MCF 10A (cell line): ENCODE measurements at regions of chr3 and their contacts with region 1.

Region 1: GRCh38 chr3:187745201-187746058 is at the start of gene BCL6:
- DNase-seq: peak; percentile 98
- H3K4me3 Mint-ChIP-seq: peak within 1 kb of the TSS; percentile 98
- H3K27ac Mint-ChIP-seq: peak within 1 kb of the TSS; percentile 100
- H3K4me1 Mint-ChIP-seq: peaks cover 15% of the 10 kb centered on the region
- H3K27me3 Mint-ChIP-seq: no peaks in the 10 kb centered on the region
- CTCF ChIP-seq: no peak
- total RNA-seq, gene BCL6: 16.4 and 20.9 TPM in 2 replicates

Region 2: GRCh38 chr3:187640569-187641059 is 104.8 kb before region 1 on chr3:
- CTCF ChIA-PET with region 1: no interaction called
- POLR2A ChIA-PET with region 1: no interaction called
- intact Hi-C with region 1: no loop called
- DNase-seq: no peak
- H3K4me3 Mint-ChIP-seq: no peak overlapping the region
- H3K27ac Mint-ChIP-seq: no peak overlapping the region
- H3K4me1 Mint-ChIP-seq: no peaks in the 10 kb centered on the region
- H3K27me3 Mint-ChIP-seq: no peaks in the 10 kb centered on the region
- CTCF ChIP-seq: no peak

Region 3: DNA sequence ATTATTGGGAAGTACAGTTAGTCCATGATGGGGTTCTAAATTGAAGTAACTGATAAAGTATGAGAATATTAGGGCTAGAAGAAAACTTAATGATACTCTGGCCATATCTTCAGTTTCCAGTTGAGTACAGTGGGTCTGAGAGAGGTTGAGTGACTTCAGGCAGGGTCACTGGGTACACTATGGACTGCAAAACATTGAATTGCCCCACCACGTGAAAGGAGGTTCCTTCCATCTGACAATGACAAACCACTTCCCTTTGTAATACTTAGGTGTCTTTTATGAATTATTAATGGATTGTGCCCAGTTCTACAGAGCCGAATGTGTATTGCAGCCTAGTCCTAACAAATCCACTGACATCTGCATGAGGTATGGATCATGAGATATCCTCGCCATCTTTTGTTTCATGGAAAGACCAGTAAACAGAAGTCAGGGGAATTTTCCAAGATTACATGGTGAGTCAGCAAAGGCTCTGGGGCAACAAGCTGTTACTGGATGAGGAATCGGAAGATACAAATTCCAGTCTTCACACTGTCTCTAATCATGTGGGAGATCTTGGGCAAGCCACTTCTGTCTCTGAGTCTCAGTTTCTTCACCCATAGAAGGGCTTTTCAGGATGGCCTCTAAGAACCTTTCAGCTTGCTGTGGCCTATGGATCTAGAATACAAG is 66.3 kb after region 1 on chr3:
- CTCF ChIA-PET with region 1: interaction called, 17 read pairs
- POLR2A ChIA-PET with region 1: interaction called, 227 read pairs
- intact Hi-C with region 1: no loop called
- DNase-seq: peak; percentile 83
- H3K4me3 Mint-ChIP-seq: no peak overlapping the region
- H3K27ac Mint-ChIP-seq: peak overlapping the region; percentile 44
- H3K4me1 Mint-ChIP-seq: peaks cover 31% of the 10 kb centered on the region
- H3K27me3 Mint-ChIP-seq: no peaks in the 10 kb centered on the region
- CTCF ChIP-seq: no peak

Region 4: DNA sequence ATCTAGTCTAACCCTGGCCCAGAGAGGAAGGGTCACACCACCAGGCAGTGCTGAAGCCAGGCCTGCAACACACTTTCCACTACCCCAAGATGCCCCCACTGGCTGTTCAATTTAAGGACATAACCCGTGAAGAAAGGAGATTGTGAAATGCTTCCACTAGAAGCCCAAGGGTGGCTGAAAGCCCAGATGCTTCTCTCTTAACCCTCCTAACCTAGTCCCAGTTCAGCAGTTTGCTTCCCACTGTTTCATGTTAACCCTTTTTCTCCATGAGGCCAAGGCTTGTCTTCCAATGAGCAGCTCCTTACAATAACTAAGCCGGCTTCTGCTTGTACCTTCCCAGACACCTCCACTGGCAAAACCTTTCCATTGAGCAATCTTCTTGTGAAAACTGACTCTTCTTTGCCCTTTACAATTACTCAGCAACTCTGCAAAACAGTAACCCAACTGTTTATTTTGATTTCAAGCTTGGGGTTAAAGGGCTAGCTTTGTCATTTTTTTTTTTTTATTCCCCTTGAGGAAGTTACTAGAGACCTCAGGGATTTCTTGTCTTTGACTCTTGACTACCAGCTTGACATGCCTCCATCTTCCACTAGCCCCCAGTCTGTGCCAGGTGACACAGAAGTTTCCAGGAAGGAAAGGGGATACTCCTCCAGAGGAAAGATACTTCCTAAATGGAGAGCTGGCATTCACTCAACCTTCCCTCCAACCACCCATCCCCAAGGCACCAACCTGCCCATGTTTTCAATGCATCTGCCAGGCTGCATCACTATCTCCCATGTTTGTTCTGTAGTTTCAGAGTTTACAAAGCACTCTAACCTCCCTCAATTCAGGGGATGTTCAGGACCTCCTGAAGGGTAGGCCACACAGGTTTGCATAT is 209.9 kb after region 1 on chr3:
- CTCF ChIA-PET with region 1: interaction called, 4 read pairs
- POLR2A ChIA-PET with region 1: interaction called, 15 read pairs
- intact Hi-C with region 1: no loop called
- DNase-seq: peak; percentile 92
- H3K4me3 Mint-ChIP-seq: no peak overlapping the region
- H3K27ac Mint-ChIP-seq: peak overlapping the region; percentile 86
- H3K4me1 Mint-ChIP-seq: peaks cover 23% of the 10 kb centered on the region
- H3K27me3 Mint-ChIP-seq: no peaks in the 10 kb centered on the region
- CTCF ChIP-seq: no peak

Region 5: DNA sequence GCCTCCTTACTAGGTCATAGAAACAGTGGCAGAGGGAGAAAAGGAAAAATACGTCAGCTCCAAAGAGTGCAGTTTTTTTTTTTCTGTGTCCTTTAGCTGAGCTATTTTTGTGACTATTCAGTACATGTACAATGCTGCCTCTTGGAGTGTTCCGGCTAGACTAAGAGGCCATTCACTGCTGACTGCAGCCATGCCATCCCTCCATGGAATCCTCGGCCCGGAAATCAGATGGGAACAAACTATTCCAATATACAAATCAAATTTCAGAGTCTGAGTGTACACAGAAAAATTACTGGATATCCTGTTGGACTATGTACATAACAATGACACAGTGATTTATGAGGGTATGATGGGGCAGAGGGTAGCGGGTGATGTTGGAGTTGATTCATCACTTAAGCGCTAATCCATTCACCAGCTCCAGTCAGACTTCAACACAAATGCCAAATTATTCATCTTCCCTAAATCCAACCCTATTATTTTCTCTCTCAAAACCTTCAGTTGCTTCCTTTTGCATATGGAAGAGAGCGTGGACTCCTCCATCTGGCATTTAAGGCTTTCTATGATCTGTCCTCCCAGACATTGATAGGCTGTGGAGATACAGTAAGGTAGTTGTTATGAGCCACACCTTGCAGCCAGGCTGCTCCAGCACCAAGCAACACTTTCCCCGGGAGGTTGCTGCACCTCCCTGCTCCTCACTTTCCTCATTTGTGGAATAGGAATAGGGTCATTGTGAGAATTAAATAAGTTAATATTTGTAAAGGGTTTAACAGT is 517.7 kb after region 1 on chr3:
- CTCF ChIA-PET with region 1: interaction called, 9 read pairs
- POLR2A ChIA-PET with region 1: interaction called, 29 read pairs
- intact Hi-C with region 1: no loop called
- DNase-seq: peak; percentile 62
- H3K4me3 Mint-ChIP-seq: no peak overlapping the region
- H3K27ac Mint-ChIP-seq: peak overlapping the region; percentile 43
- H3K4me1 Mint-ChIP-seq: peaks cover 8% of the 10 kb centered on the region
- H3K27me3 Mint-ChIP-seq: no peaks in the 10 kb centered on the region
- CTCF ChIP-seq: no peak

Region 6: GRCh38 chr3:188627652-188628051 is 882.2 kb after region 1 on chr3:
- CTCF ChIA-PET with region 1: interaction called, 3 read pairs
- POLR2A ChIA-PET with region 1: interaction called, 3 read pairs
- intact Hi-C with region 1: loop called (anchors 10 kb)
- DNase-seq: peak; percentile 41
- H3K4me3 Mint-ChIP-seq: no peak overlapping the region
- H3K27ac Mint-ChIP-seq: peak overlapping the region; percentile 85
- H3K4me1 Mint-ChIP-seq: peaks cover 37% of the 10 kb centered on the region
- H3K27me3 Mint-ChIP-seq: no peaks in the 10 kb centered on the region
- CTCF ChIP-seq: no peak

Region 7: DNA sequence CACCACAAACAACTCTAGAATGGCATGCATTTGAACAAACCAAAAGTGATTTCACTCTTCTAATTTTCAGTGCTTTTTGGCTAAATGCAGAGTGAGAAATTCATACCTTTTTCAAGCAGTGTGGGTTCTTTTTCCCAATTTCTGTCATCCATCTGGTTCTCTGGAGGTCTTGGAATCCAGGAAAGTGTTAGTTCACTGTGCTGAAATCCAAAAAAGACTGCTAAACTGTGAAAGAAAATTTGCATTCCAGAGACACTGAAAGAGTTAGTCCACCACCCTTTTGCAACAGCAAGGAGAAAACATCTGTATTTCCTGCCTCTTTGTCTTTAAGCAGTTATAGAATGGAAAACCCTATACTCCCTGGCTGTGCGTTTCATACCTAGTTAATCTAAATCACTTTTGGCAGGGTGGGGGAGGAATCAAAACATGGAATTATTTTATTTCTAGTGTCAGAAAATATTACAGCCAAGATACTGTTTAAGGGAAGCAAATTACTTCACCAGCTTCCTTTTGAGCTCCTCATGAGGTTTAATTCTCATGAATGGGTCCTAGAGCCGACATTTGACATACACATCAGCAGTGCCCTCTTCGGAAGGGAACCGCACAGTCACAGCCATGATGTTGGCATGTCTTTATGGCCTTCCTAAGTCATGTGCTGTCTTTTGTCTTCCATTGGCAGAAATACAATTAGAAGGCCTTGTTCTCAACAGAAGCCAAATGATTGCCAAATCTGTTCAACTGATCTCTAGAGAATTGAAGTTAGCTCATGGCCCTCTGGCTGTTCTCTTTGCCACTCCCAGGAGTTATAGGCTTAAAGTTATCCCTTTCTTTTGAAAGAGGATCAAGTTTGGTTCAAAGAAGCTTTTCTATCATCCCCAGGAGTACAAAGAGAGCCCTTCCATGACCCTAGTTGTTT is 1108.7 kb after region 1 on chr3:
- CTCF ChIA-PET with region 1: interaction called, 7 read pairs
- POLR2A ChIA-PET with region 1: interaction called, 20 read pairs
- intact Hi-C with region 1: no loop called
- DNase-seq: peak; percentile 73
- H3K4me3 Mint-ChIP-seq: peak overlapping the region; percentile 50
- H3K27ac Mint-ChIP-seq: peak overlapping the region; percentile 87
- H3K4me1 Mint-ChIP-seq: peaks cover 26% of the 10 kb centered on the region
- H3K27me3 Mint-ChIP-seq: no peaks in the 10 kb centered on the region
- CTCF ChIP-seq: no peak